ENCODE measurements at regions of chr22 and their contacts with region 1.

Region 1: DNA sequence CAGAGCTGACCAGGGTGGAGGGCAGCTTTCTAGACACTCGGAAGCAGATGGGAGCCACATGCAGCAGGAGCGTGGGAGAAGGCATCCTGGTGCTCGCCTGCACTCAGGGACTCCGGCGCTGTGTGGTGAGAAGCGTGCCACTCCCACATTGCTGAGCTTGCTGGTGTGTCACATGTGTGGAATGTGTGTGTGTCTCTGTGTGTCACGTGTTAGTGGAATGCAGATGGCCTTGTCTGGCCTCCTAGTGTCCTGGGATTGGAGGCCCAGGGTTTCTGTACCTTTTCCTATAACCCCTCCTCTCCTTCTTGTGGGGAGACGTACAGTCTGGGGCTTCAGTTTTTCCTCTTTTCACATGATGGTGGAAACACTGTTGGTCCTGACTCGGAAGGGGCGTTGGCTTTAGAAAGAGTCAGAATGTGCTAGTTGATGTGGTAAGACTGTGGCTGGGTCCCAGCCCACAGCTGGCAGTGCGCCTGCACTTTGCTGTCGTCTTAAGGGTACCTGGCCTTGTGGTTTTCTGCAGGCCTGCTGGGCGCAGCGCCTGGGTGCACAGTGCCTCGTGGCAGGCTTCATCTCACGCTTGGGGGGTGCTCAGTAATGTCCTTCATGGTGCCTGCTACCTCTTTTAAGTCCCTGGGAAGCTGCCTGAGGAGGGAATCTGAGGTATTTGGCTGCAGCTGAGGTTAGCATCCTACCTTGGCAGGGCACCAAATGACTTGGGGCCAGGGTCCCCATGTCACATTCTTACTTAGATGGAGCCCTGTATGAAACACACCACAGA is 61.8 kb downstream of the MED15 start:
- DNase-seq: peak; percentile 56
- ATAC-seq: peak; percentile 62
- H3K4me3 ChIP-seq: no peak overlapping the region
- H3K4me3 Mint-ChIP-seq: no peak overlapping the region
- H3K27ac ChIP-seq: peak overlapping the region in 1 of 2 donors; percentile 9
- H3K27ac Mint-ChIP-seq: peak overlapping the region; percentile 59
- H3K4me1 ChIP-seq: peaks cover 0 to 16% of the 10 kb centered on the region in 2 donors
- H3K4me1 Mint-ChIP-seq: peaks cover 6% of the 10 kb centered on the region
- H3K27me3 ChIP-seq: no peaks in the 10 kb centered on the region
- H3K27me3 Mint-ChIP-seq: no peaks in the 10 kb centered on the region
- CTCF ChIP-seq: no peak

Region 2: DNA sequence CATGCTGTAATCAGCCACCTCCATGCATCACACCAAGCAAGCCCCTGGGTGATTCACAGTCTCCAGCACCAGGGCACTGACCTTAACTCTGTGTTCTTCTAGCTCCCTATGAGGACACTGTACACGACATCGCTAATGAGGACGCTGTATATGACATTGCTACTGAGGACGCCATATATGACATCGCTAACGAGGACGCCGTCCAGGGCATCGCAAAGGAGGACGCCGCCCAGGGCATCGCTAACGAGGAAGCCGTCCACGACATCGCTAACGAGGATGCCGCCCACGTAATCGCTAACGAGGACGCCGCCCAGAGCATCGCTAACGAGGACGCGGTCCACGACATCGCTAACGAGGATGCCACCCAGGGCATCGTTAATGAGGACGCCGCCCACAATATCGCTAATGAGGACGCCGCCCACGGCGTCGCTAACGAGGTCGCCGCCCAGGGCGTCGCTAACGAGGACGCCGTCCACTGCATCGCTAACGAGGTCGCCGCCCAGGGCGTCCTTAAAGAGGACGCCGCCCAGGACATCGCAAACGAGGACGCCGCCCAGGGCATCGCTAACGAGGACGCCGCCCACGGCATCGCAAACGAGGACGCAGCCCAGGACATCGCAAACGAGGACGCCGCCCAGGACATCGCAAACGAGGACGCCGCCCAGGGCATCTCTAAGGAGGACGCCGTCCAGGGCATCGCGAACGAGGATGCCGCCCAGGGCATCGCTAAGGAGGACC is 214.8 kb before region 1 on chr22:
- CTCF ChIA-PET with region 1: no interaction called
- POLR2A ChIA-PET with region 1: no interaction called
- intact Hi-C with region 1: no loop called
- DNase-seq: no peak
- ATAC-seq: no peak
- H3K4me3 ChIP-seq: no peak overlapping the region
- H3K4me3 Mint-ChIP-seq: no peak overlapping the region
- H3K27ac ChIP-seq: no peak overlapping the region
- H3K27ac Mint-ChIP-seq: no peak overlapping the region
- H3K4me1 ChIP-seq: no peaks in the 10 kb centered on the region
- H3K4me1 Mint-ChIP-seq: no peaks in the 10 kb centered on the region
- H3K27me3 ChIP-seq: no peaks in the 10 kb centered on the region
- H3K27me3 Mint-ChIP-seq: no peaks in the 10 kb centered on the region
- CTCF ChIP-seq: no peak

Region 3: GRCh38 chr22:20552443-20553401 is 16.5 kb before region 1 on chr22:
- CTCF ChIA-PET with region 1: interaction called, 21 read pairs
- POLR2A ChIA-PET with region 1: no interaction called
- intact Hi-C with region 1: no loop called
- DNase-seq: no peak
- ATAC-seq: no peak
- H3K4me3 ChIP-seq: no peak overlapping the region
- H3K4me3 Mint-ChIP-seq: no peak overlapping the region
- H3K27ac ChIP-seq: no peak overlapping the region
- H3K27ac Mint-ChIP-seq: no peak overlapping the region
- H3K4me1 ChIP-seq: peaks cover 31 to 50% of the 10 kb centered on the region in 2 donors
- H3K4me1 Mint-ChIP-seq: peaks cover 50% of the 10 kb centered on the region
- H3K27me3 ChIP-seq: no peaks in the 10 kb centered on the region
- H3K27me3 Mint-ChIP-seq: no peaks in the 10 kb centered on the region
- CTCF ChIP-seq: no peak